ENCODE measurements at regions of chr12 and their contacts with region 1.

Region 1: DNA sequence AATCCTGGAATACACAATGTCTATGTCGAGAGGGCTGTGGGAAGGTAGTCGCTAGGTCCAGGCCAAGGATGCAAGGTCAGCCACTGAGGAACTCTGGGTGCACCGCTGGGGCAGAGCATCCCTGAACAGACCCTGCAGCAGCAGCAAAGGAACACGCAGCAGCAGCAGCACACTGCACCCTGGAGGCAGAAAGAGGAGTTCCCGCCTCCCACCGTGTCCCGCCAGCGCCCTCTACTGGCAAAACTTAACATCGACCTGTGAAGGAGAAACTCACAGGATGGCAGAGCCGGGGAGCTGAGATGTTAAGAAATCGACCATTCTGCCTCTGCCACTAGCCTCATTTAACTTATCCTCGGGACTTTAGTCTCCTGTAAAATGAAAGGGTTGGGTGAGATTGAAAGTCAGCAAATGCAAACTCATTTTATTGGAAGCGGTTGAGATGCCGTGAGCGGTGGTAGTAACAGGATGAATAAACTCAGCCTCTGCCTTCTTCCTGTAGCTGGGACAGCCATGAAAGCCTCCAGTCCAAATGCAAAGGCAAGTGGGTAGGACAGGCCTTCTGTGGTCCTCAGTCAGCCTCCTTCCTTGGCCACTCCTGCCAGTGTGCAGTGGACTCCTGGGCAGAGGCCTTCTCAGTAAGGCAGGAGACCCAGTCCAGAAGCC is 45.6 kb downstream of the STAB2 start:
- DNase-seq: peak; percentile 33
- ATAC-seq: peak; percentile 56
- H3K4me3 ChIP-seq: no peak overlapping the region
- H3K27ac ChIP-seq: no peak overlapping the region
- H3K4me1 ChIP-seq: no peaks in the 10 kb centered on the region
- H3K27me3 ChIP-seq: no peaks in the 10 kb centered on the region
- CTCF ChIP-seq: peak; percentile 97
- POLR2A ChIP-seq: no peak
- RAD21 ChIP-seq: peak; percentile 60

Region 2: GRCh38 chr12:103578926-103579325 is 53.8 kb before region 1 on chr12:
- CTCF ChIA-PET with region 1: interaction called, 3 read pairs
- POLR2A ChIA-PET with region 1: no interaction called
- dilution Hi-C with region 1: no loop called
- in situ Hi-C with region 1: no loop called
- intact Hi-C with region 1: loop called (anchors 5 kb)
- DNase-seq: no peak
- ATAC-seq: no peak
- H3K4me3 ChIP-seq: no peak overlapping the region
- H3K27ac ChIP-seq: no peak overlapping the region
- H3K4me1 ChIP-seq: no peaks in the 10 kb centered on the region
- H3K27me3 ChIP-seq: peaks cover 2% of the 10 kb centered on the region; the same call in 1 of the 2 replicates
- CTCF ChIP-seq: no peak
- POLR2A ChIP-seq: no peak
- RAD21 ChIP-seq: no peak

Region 3: GRCh38 chr12:103697971-103698751 is 65.5 kb after region 1 on chr12:
- CTCF ChIA-PET with region 1: no interaction called
- POLR2A ChIA-PET with region 1: no interaction called
- dilution Hi-C with region 1: no loop called
- in situ Hi-C with region 1: no loop called
- intact Hi-C with region 1: no loop called
- DNase-seq: no peak
- ATAC-seq: no peak
- H3K4me3 ChIP-seq: no peak overlapping the region
- H3K27ac ChIP-seq: no peak overlapping the region
- H3K4me1 ChIP-seq: no peaks in the 10 kb centered on the region
- H3K27me3 ChIP-seq: no peaks in the 10 kb centered on the region; the same call in none of the 2 replicates
- CTCF ChIP-seq: no peak
- POLR2A ChIP-seq: no peak
- RAD21 ChIP-seq: no peak

Measured in IMR-90 (cell line).